Mammary epithelial cell (primary cell): ENCODE measurements at regions of chr19 and their contacts with region 1.

Region 1: GRCh38 chr19:55437410-55438075 is 5.6 kb downstream of the SHISA7 start:
- DNase-seq: peak; percentile 64
- H3K4me3 ChIP-seq: no peak overlapping the region
- H3K27ac ChIP-seq: no peak overlapping the region
- H3K4me1 ChIP-seq: peaks cover 5% of the 10 kb centered on the region
- H3K27me3 ChIP-seq: peaks cover 21% of the 10 kb centered on the region
- CTCF ChIP-seq: no peak

Region 2: GRCh38 chr19:55160128-55160985 is 277.2 kb before region 1 on chr19:
- CTCF ChIA-PET with region 1: interaction called, 20 read pairs
- dilution Hi-C with region 1: no loop called
- in situ Hi-C with region 1: no loop called
- intact Hi-C with region 1: no loop called
- DNase-seq: peak; percentile 83
- H3K4me3 ChIP-seq: no peak overlapping the region
- H3K27ac ChIP-seq: no peak overlapping the region
- H3K4me1 ChIP-seq: peaks cover 18% of the 10 kb centered on the region
- H3K27me3 ChIP-seq: peaks cover 2% of the 10 kb centered on the region
- CTCF ChIP-seq: peak; percentile 86 to 97